Testis (tissue), 5 donors: ENCODE measurements at regions of chr11 and their contacts with region 1.

Region 1: GRCh38 chr11:14249121-14249963 is 109.6 kb downstream of the RRAS2 start:
- DNase-seq: peak; percentile 65
- H3K4me3 ChIP-seq: no peak overlapping the region
- H3K27ac ChIP-seq: no peak overlapping the region
- H3K4me1 ChIP-seq: peaks cover 4% of the 10 kb centered on the region
- H3K27me3 ChIP-seq: no peaks in the 10 kb centered on the region
- CTCF ChIP-seq: peak; percentile 55 to 89 (median 89)
- POLR2A ChIP-seq: no peak

Region 2: DNA sequence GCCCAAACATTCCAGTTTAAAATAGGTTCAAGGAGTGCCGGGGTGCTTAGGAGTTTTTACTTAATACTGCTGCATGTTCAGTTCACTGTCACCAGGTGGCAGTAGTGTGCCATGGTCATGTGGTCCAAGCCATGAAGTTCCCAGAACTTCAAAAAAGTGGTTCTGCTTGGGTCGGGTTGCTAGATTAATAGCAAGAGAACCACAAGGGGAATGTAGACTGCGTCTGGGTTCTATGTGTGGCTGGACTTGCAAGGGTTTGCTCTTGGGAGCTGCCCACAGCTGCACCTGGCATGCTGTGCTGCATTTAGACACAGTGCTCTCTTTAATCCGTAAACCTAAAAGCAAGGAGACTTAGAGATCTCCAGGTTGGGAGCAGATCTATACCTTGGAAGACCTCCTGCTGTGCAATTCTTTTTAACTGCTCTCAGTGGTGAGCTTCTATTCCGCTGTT is 293.3 kb before region 1 on chr11:
- intact Hi-C with region 1: loop called (anchors 10 kb)
- DNase-seq: peak; percentile 80
- H3K4me3 ChIP-seq: no peak overlapping the region
- H3K27ac ChIP-seq: no peak overlapping the region
- H3K4me1 ChIP-seq: no peaks in the 10 kb centered on the region
- H3K27me3 ChIP-seq: no peaks in the 10 kb centered on the region
- CTCF ChIP-seq: peak; percentile 76 to 90 (median 80)
- POLR2A ChIP-seq: no peak